ENCODE measurements at regions of chr4 and their contacts with region 1.

Region 1: DNA sequence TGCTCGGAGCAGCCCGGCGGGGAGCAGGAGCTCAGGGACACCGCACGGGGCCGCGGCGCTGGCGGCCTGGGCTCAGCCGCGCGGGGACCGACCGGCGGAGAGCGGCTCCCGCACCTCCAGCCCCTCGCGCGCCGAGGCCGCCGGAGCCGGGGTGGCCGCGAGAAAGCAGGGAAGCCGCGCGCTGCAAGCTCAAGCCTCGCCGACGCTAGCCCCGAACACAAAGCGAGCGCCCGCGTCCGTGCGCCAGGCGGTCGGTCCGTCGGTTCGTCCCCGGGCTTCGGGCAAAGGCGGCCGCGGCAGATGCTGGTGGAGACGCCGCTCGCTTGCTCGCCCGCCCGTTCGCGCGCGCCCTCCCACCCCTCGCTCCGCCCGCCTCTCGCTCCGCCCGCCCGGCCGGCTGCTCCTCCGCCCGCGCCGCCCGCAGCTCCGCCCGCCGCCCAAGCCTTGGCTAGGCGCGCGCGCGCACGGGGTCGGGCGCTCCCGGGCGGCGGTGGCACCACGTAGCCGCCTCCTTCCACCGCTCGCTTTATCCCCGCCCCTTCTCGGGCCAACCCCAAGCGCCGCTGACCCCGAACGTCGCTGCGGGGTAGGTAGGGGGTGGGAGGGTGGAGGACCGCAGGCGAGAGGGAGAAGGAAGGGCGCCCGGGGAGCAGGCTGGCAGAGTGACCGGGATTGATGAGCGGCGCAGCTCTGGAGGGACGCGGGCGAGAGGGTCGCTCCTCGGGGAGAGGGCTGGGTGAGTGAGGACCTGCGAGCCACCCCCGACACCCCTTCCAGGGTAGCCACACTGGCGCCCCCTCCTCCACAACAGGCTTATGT is at the start of gene TSPAN5:
- DNase-seq: peak; percentile 78
- ATAC-seq: peak; percentile 86
- H3K4me3 Mint-ChIP-seq: peak within 1 kb of the TSS; percentile 92
- H3K27ac Mint-ChIP-seq: peak within 1 kb of the TSS; percentile 68
- H3K4me1 Mint-ChIP-seq: peaks cover 51% of the 10 kb centered on the region
- H3K27me3 Mint-ChIP-seq: peaks cover 7% of the 10 kb centered on the region
- CTCF ChIP-seq: no peak
- total RNA-seq, gene TSPAN5: 1.6 and 2.7 TPM in 2 replicates

Region 2: GRCh38 chr4:98143001-98143899 is 515.2 kb before region 1 on chr4 and contains the start of gene STPG2:
- CTCF ChIA-PET with region 1: no interaction called
- POLR2A ChIA-PET with region 1: interaction called, 4 read pairs
- intact Hi-C with region 1: loop called (anchors 1 kb)
- DNase-seq: peak; percentile 97
- ATAC-seq: peak; percentile 99
- H3K4me3 Mint-ChIP-seq: peak within 1 kb of the TSS; percentile 92
- H3K27ac Mint-ChIP-seq: peak within 1 kb of the TSS; percentile 97
- H3K4me1 Mint-ChIP-seq: peaks cover 25% of the 10 kb centered on the region
- H3K27me3 Mint-ChIP-seq: no peaks in the 10 kb centered on the region
- CTCF ChIP-seq: no peak
- total RNA-seq, gene STPG2: 0.37 and 0.69 TPM in 2 replicates

Region 3: GRCh38 chr4:98260579-98261290 is 397.8 kb before region 1 on chr4:
- CTCF ChIA-PET with region 1: no interaction called
- POLR2A ChIA-PET with region 1: interaction called, 6 read pairs
- intact Hi-C with region 1: loop called (anchors 1 kb)
- DNase-seq: peak; percentile 89
- ATAC-seq: peak; percentile 93
- H3K4me3 Mint-ChIP-seq: peak overlapping the region; percentile 95
- H3K27ac Mint-ChIP-seq: peak overlapping the region; percentile 94
- H3K4me1 Mint-ChIP-seq: peaks cover 48% of the 10 kb centered on the region
- H3K27me3 Mint-ChIP-seq: no peaks in the 10 kb centered on the region
- CTCF ChIP-seq: no peak

Region 4: GRCh38 chr4:98467627-98468072 is 190.8 kb before region 1 on chr4:
- CTCF ChIA-PET with region 1: no interaction called
- POLR2A ChIA-PET with region 1: no interaction called
- intact Hi-C with region 1: loop called (anchors 1 kb)
- DNase-seq: peak; percentile 25
- ATAC-seq: peak; percentile 94
- H3K4me3 Mint-ChIP-seq: peak overlapping the region; percentile 61
- H3K27ac Mint-ChIP-seq: no peak overlapping the region
- H3K4me1 Mint-ChIP-seq: peaks cover 7% of the 10 kb centered on the region
- H3K27me3 Mint-ChIP-seq: no peaks in the 10 kb centered on the region
- CTCF ChIP-seq: peak; percentile 12

Region 5: GRCh38 chr4:98950925-98951324 is 292.4 kb after region 1 on chr4:
- CTCF ChIA-PET with region 1: no interaction called
- POLR2A ChIA-PET with region 1: interaction called, 17 read pairs
- intact Hi-C with region 1: no loop called
- DNase-seq: no peak
- ATAC-seq: no peak
- H3K4me3 Mint-ChIP-seq: no peak overlapping the region
- H3K27ac Mint-ChIP-seq: no peak overlapping the region
- H3K4me1 Mint-ChIP-seq: no peaks in the 10 kb centered on the region
- H3K27me3 Mint-ChIP-seq: peaks cover 3% of the 10 kb centered on the region
- CTCF ChIP-seq: no peak

Region 6: GRCh38 chr4:99816545-99817308 is 1158.2 kb after region 1 on chr4 and contains the start of gene DAPP1:
- CTCF ChIA-PET with region 1: no interaction called
- POLR2A ChIA-PET with region 1: no interaction called
- intact Hi-C with region 1: loop called (anchors 5 kb)
- DNase-seq: peak; percentile 64
- ATAC-seq: peak; percentile 92
- H3K4me3 Mint-ChIP-seq: peak within 1 kb of the TSS; percentile 89
- H3K27ac Mint-ChIP-seq: peak within 1 kb of the TSS; percentile 88
- H3K4me1 Mint-ChIP-seq: peaks cover 75% of the 10 kb centered on the region
- H3K27me3 Mint-ChIP-seq: no peaks in the 10 kb centered on the region
- CTCF ChIP-seq: no peak
- total RNA-seq, gene DAPP1: 137 and 144 TPM in 2 replicates

Measured in activated B cell treated with CpG ODN at 0.5 μM for 24 hours (primary cell).